ENCODE measurements at regions of chr1 and their contacts with region 1.

Region 1: GRCh38 chr1:61318319-61319125 is 236.2 kb downstream of the NFIA start:
- DNase-seq: peak; percentile 34
- H3K4me3 Mint-ChIP-seq: peak overlapping the region; percentile 53
- H3K27ac Mint-ChIP-seq: peak overlapping the region; percentile 90
- H3K4me1 Mint-ChIP-seq: peaks cover 32% of the 10 kb centered on the region
- H3K27me3 Mint-ChIP-seq: no peaks in the 10 kb centered on the region

Region 2: DNA sequence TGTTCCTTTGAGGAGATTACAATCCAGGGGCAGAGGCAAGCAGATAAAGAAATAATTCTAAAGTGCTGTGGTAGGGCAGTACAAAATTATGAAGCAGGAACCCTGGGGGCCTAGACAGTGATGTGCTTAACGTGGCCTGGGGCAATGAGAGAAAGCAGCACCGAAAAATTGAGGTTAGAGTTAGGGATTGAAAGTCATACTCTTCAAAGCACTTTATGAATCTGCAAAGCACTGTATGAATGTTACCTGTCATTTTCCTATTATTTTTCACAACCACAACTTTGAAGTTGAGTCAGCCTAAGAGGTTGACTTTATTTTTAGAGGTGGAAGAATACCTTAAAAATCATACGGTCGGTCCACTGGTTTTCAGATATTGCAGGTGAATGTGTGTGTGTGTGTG is 419.5 kb before region 1 on chr1:
- intact Hi-C with region 1: loop called (anchors 2 kb)
- DNase-seq: no peak
- H3K4me3 Mint-ChIP-seq: no peak overlapping the region
- H3K27ac Mint-ChIP-seq: no peak overlapping the region
- H3K4me1 Mint-ChIP-seq: no peaks in the 10 kb centered on the region
- H3K27me3 Mint-ChIP-seq: peaks cover 2% of the 10 kb centered on the region

Region 3: GRCh38 chr1:61270761-61271411 is 47.6 kb before region 1 on chr1:
- intact Hi-C with region 1: loop called (anchors 1 kb)
- DNase-seq: no peak
- H3K4me3 Mint-ChIP-seq: no peak overlapping the region
- H3K27ac Mint-ChIP-seq: peak overlapping the region; percentile 32
- H3K4me1 Mint-ChIP-seq: peaks cover 17% of the 10 kb centered on the region
- H3K27me3 Mint-ChIP-seq: peaks cover 10% of the 10 kb centered on the region

Region 4: GRCh38 chr1:61332196-61332753 is 13.8 kb after region 1 on chr1:
- intact Hi-C with region 1: loop called (anchors 1 kb)
- DNase-seq: peak; percentile 14
- H3K4me3 Mint-ChIP-seq: peak overlapping the region; percentile 4
- H3K27ac Mint-ChIP-seq: peak overlapping the region; percentile 77
- H3K4me1 Mint-ChIP-seq: peaks cover 29% of the 10 kb centered on the region
- H3K27me3 Mint-ChIP-seq: peaks cover 23% of the 10 kb centered on the region

Region 5: GRCh38 chr1:62783723-62784508 is 1465.4 kb after region 1 on chr1 and contains the start of gene ATG4C:
- intact Hi-C with region 1: loop called (anchors 10 kb)
- DNase-seq: peak; percentile 90
- H3K4me3 Mint-ChIP-seq: no peak within 1 kb of the TSS
- H3K27ac Mint-ChIP-seq: no peak within 1 kb of the TSS
- H3K4me1 Mint-ChIP-seq: peaks cover 8% of the 10 kb centered on the region
- H3K27me3 Mint-ChIP-seq: peaks cover 4% of the 10 kb centered on the region
- total RNA-seq, gene ATG4C: 8.8 TPM in 2 replicates